WTC11 (cell line): ENCODE measurements at regions of chr6 and their contacts with region 1.

Region 1: DNA sequence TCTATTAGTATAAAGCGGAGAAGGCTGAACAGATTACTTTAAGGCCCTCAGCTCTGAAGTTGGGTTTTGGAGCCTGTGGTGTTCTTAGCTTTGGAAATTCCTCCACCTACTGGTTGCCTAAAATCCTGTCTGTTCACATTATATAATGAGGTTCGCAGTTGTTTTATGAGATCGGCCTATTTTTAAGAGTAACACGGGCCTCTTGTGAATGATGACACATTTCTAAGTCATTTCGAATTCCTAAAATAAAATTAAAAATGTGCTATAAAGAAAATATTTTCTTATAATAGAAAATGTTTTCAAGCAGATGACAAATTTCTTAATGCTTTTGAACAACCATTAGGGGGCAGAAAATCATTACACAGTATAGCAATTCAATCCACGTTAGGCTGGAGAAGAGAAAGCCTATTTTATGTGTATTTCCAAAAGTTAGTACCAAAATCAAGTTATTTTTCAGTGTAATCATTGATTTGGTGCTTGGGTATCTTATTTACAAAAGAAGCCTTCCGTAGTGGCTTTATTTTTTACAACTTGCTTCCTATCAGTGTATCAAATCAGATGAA is 15.8 kb upstream of the FAM8A1 start:
- DNase-seq: no peak
- ATAC-seq: peak; percentile 44
- H3K4me3 Mint-ChIP-seq: no peak overlapping the region
- H3K27ac Mint-ChIP-seq: no peak overlapping the region
- H3K4me1 Mint-ChIP-seq: no peaks in the 10 kb centered on the region
- H3K27me3 Mint-ChIP-seq: peaks cover 14% of the 10 kb centered on the region
- CTCF ChIP-seq: peak; percentile 14

Region 2: DNA sequence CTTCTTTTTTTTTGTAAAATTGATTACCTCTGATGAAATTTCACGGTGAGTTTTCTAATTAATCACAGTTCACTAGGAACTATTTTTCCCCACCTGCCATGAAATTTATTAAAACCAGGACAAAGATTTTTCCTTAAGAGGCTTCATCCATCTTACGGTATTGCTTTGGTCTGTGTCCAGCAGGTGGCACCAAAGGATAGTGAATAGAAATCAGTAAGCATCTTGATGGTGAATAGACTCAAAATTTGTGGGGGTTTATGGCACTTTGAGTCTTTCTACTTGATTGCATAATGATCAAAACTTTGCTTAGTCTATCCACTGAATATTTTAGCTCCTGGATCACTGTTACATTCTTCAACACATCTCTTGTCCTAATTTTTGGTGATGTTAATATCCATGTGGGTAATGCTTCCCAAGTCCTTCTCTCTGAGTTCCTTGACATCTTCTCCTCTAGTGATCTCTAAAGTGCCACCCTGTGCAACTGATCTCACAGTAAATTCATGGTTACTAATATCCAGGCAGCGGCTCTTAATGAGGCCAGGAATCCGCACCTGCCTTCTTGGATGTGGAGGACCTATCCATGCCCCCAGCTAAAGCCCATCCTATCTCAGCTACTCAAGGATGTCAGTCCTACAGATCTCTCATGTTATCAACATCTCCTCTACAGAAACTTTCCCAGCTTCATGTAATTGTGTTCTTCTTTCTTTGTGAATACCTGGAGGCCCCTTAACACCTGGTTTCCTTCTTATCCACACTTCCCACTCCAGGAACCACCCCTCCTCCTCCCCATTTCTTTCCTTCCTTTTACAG is 428.0 kb before region 1 on chr6:
- CTCF ChIA-PET with region 1: interaction called, 10 read pairs
- POLR2A ChIA-PET with region 1: no interaction called
- DNase-seq: peak; percentile 61
- ATAC-seq: peak; percentile 55
- H3K4me3 Mint-ChIP-seq: no peak overlapping the region
- H3K27ac Mint-ChIP-seq: no peak overlapping the region
- H3K4me1 Mint-ChIP-seq: no peaks in the 10 kb centered on the region
- H3K27me3 Mint-ChIP-seq: peaks cover 3% of the 10 kb centered on the region; the same call in 1 of the 2 replicates
- CTCF ChIP-seq: peak; percentile 75

Region 3: GRCh38 chr6:17167327-17167979 is 416.9 kb before region 1 on chr6:
- CTCF ChIA-PET with region 1: interaction called, 11 read pairs
- POLR2A ChIA-PET with region 1: no interaction called
- DNase-seq: peak; percentile 66
- ATAC-seq: peak; percentile 100
- H3K4me3 Mint-ChIP-seq: no peak overlapping the region
- H3K27ac Mint-ChIP-seq: no peak overlapping the region
- H3K4me1 Mint-ChIP-seq: peaks cover 7% of the 10 kb centered on the region
- H3K27me3 Mint-ChIP-seq: no peaks in the 10 kb centered on the region
- CTCF ChIP-seq: peak; percentile 33; the same call in 1 of the 2 replicates

Region 4: GRCh38 chr6:17200395-17200794 is 383.9 kb before region 1 on chr6:
- CTCF ChIA-PET with region 1: interaction called, 10 read pairs
- POLR2A ChIA-PET with region 1: no interaction called
- DNase-seq: peak; percentile 89
- ATAC-seq: peak; percentile 99
- H3K4me3 Mint-ChIP-seq: peak overlapping the region; percentile 57
- H3K27ac Mint-ChIP-seq: no peak overlapping the region
- H3K4me1 Mint-ChIP-seq: peaks cover 4% of the 10 kb centered on the region
- H3K27me3 Mint-ChIP-seq: peaks cover 15% of the 10 kb centered on the region
- CTCF ChIP-seq: peak; percentile 31; the same call in 1 of the 2 replicates

Region 5: GRCh38 chr6:17599885-17600526 is 15.7 kb after region 1 on chr6 and contains the start of gene FAM8A1:
- CTCF ChIA-PET with region 1: interaction called, 11 read pairs
- POLR2A ChIA-PET with region 1: interaction called, 4 read pairs
- DNase-seq: peak; percentile 97
- ATAC-seq: peak; percentile 93
- H3K4me3 Mint-ChIP-seq: peak within 1 kb of the TSS; percentile 74
- H3K27ac Mint-ChIP-seq: peak within 1 kb of the TSS; percentile 83
- H3K4me1 Mint-ChIP-seq: peaks cover 13% of the 10 kb centered on the region
- H3K27me3 Mint-ChIP-seq: no peaks in the 10 kb centered on the region
- CTCF ChIP-seq: no peak
- total RNA-seq, gene FAM8A1: 8.5 to 10.3 TPM (median 9.4 TPM) in 3 replicates

Region 6: GRCh38 chr6:17714879-17715851 is 130.8 kb after region 1 on chr6:
- CTCF ChIA-PET with region 1: no interaction called
- POLR2A ChIA-PET with region 1: no interaction called
- DNase-seq: no peak
- ATAC-seq: no peak
- H3K4me3 Mint-ChIP-seq: no peak overlapping the region
- H3K27ac Mint-ChIP-seq: no peak overlapping the region
- H3K4me1 Mint-ChIP-seq: peaks cover 13% of the 10 kb centered on the region
- H3K27me3 Mint-ChIP-seq: no peaks in the 10 kb centered on the region
- CTCF ChIP-seq: no peak